Endothelial cell of umbilical vein (primary cell): ENCODE measurements at regions of chr10 and their contacts with region 1.

Region 1: GRCh38 chr10:98045785-98046389 is 15.5 kb upstream of the CRTAC1 start:
- DNase-seq: peak; percentile 53
- H3K4me3 ChIP-seq: no peak overlapping the region
- H3K27ac ChIP-seq: no peak overlapping the region
- H3K4me1 ChIP-seq: no peaks in the 10 kb centered on the region
- H3K27me3 ChIP-seq: peaks cover 3 to 5% of the 10 kb centered on the region in 2 experiments
- CTCF ChIP-seq: peak; percentile 90 to 91
- POLR2A ChIP-seq: no peak

Region 2: GRCh38 chr10:97759158-97759887 is 286.6 kb before region 1 on chr10:
- CTCF ChIA-PET with region 1: interaction called, 49 read pairs
- POLR2A ChIA-PET with region 1: interaction called, 8 read pairs
- dilution Hi-C with region 1: no loop called
- intact Hi-C with region 1: loop called (anchors 1 kb)
- DNase-seq: peak; percentile 62
- H3K4me3 ChIP-seq: no peak overlapping the region
- H3K27ac ChIP-seq: no peak overlapping the region
- H3K4me1 ChIP-seq: no peaks in the 10 kb centered on the region
- H3K27me3 ChIP-seq: no peaks in the 10 kb centered on the region
- CTCF ChIP-seq: peak; percentile 90 to 99
- POLR2A ChIP-seq: no peak

Region 3: GRCh38 chr10:97792141-97792721 is 253.7 kb before region 1 on chr10:
- CTCF ChIA-PET with region 1: interaction called, 77 read pairs
- POLR2A ChIA-PET with region 1: no interaction called
- dilution Hi-C with region 1: no loop called
- intact Hi-C with region 1: loop called (anchors 1 kb)
- DNase-seq: peak; percentile 43
- H3K4me3 ChIP-seq: no peak overlapping the region
- H3K27ac ChIP-seq: no peak overlapping the region
- H3K4me1 ChIP-seq: no peaks in the 10 kb centered on the region
- H3K27me3 ChIP-seq: peaks cover 3 to 6% of the 10 kb centered on the region in 2 experiments
- CTCF ChIP-seq: peak; percentile 76 to 93
- POLR2A ChIP-seq: no peak

Region 4: GRCh38 chr10:97869091-97870042 is 176.5 kb before region 1 on chr10:
- CTCF ChIA-PET with region 1: interaction called, 18 read pairs
- POLR2A ChIA-PET with region 1: no interaction called
- dilution Hi-C with region 1: no loop called
- intact Hi-C with region 1: no loop called
- DNase-seq: peak; percentile 78
- H3K4me3 ChIP-seq: no peak overlapping the region
- H3K27ac ChIP-seq: no peak overlapping the region
- H3K4me1 ChIP-seq: peaks cover 5% of the 10 kb centered on the region
- H3K27me3 ChIP-seq: peaks cover 13 to 15% of the 10 kb centered on the region in 2 experiments
- CTCF ChIP-seq: peak; percentile 73 to 75
- POLR2A ChIP-seq: peak; percentile 38

Region 5: DNA sequence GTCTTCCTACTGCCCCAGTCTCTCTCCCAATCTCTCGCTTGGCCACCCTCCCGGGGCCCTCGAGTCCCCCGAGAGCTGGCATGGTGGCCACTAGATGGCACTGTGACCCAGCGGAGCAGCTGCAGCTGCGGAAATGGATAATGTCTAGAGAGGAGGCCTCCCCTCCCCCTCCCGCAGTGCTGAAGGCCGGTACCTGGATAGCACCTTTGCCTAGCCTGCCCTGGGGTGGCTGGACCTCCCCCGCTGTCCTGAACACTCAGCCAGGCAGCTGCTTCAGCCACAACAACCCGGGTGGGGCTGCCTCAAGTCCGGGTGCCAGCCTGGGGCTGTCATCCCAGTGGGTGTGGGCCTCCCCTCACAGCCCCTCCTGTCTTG is 131.1 kb before region 1 on chr10:
- CTCF ChIA-PET with region 1: interaction called, 540 read pairs
- POLR2A ChIA-PET with region 1: no interaction called
- dilution Hi-C with region 1: no loop called
- intact Hi-C with region 1: loop called (anchors 1 kb)
- DNase-seq: peak; percentile 52
- H3K4me3 ChIP-seq: no peak overlapping the region
- H3K27ac ChIP-seq: no peak overlapping the region
- H3K4me1 ChIP-seq: no peaks in the 10 kb centered on the region
- H3K27me3 ChIP-seq: no peaks in the 10 kb centered on the region
- CTCF ChIP-seq: peak; percentile 83 to 96
- POLR2A ChIP-seq: no peak

Region 6: GRCh38 chr10:98067165-98067564 is 21.3 kb after region 1 on chr10:
- CTCF ChIA-PET with region 1: interaction called, 18 read pairs
- POLR2A ChIA-PET with region 1: no interaction called
- dilution Hi-C with region 1: no loop called
- intact Hi-C with region 1: no loop called
- DNase-seq: no peak
- H3K4me3 ChIP-seq: no peak overlapping the region
- H3K27ac ChIP-seq: no peak overlapping the region
- H3K4me1 ChIP-seq: no peaks in the 10 kb centered on the region
- H3K27me3 ChIP-seq: no peaks in the 10 kb centered on the region
- CTCF ChIP-seq: no peak
- POLR2A ChIP-seq: no peak